ENCODE measurements at regions of chr7 and their contacts with region 1.

Region 1: GRCh38 chr7:150567169-150567568 is at the start of gene GIMAP4:
- DNase-seq: peak; percentile 69
- H3K4me3 ChIP-seq: peak within 1 kb of the TSS; percentile 78 to 80 (median 79)
- H3K27ac ChIP-seq: peak within 1 kb of the TSS; percentile 63
- H3K4me1 ChIP-seq: peaks cover 62% of the 10 kb centered on the region
- H3K27me3 ChIP-seq: no peaks in the 10 kb centered on the region
- CTCF ChIP-seq: no peak
- POLR2A ChIP-seq: peak; percentile 49
- total RNA-seq, gene GIMAP4: 168 and 174 TPM in 2 replicates

Region 2: DNA sequence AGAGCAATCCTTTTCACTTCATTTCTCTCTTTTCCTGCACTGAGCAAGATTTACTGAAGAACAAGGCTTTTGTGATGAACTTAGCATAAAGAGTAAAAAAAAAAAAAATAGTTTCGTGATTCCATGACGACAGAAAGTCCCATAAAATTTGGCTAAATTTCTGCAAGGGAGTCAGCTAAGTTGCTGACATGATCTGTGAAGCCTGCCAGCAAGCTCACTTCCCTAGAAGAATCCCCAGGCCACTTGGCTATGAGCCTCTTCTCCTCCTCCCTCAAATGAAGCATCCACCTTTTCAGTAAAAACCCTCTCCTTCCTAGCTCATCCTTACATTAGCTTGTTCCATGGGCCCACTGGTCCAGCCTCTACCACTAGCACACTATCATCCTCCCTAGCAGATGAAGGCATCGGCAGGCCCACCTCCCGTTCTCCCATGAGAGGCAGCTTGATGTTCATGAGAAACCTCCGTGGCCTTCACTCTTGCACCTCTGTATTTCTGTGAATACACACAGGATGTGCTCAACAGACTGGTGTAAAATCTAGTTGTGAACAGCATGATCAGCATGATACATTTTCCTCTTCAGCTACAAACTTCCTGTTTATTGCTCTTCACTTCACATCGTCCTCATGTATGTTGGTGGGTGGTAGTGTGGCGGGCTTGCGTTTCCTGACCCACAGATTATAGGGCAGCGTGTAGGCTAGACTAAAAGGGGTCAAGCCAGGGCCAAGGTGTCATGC is 85.8 kb before region 1 on chr7:
- CTCF ChIA-PET with region 1: interaction called, 5 read pairs
- POLR2A ChIA-PET with region 1: no interaction called
- dilution Hi-C with region 1: no loop called
- intact Hi-C with region 1: loop called (anchors 1 kb)
- DNase-seq: no peak
- H3K4me3 ChIP-seq: no peak overlapping the region
- H3K27ac ChIP-seq: no peak overlapping the region
- H3K4me1 ChIP-seq: peaks cover 15% of the 10 kb centered on the region
- H3K27me3 ChIP-seq: no peaks in the 10 kb centered on the region
- CTCF ChIP-seq: no peak
- POLR2A ChIP-seq: no peak

Region 3: DNA sequence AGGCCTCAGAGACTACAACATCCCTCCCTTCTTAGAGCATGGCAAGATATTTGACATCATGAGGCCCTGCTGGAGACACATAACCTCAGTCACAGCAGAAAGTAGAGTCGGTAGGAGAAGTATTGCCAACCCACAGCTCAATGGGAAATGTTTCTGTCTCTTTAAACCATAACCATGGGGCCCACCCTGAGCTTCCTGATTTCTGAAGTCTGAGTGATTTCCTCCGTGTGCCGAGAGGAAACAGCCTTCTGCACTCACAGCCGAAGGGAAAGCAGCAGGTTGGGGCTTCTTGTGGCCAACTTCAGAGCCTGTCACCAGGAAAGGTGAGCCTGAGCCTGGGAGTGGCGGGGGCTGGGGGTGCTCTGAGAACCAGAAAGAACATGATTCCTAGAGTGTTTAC is 149.2 kb after region 1 on chr7 and contains the start of gene GIMAP1:
- CTCF ChIA-PET with region 1: no interaction called
- POLR2A ChIA-PET with region 1: no interaction called
- dilution Hi-C with region 1: no loop called
- intact Hi-C with region 1: no loop called
- DNase-seq: peak; percentile 88
- H3K4me3 ChIP-seq: peak within 1 kb of the TSS; percentile 61 to 84 (median 78)
- H3K27ac ChIP-seq: peak within 1 kb of the TSS; percentile 39
- H3K4me1 ChIP-seq: peaks cover 18% of the 10 kb centered on the region
- H3K27me3 ChIP-seq: no peaks in the 10 kb centered on the region
- CTCF ChIP-seq: no peak
- POLR2A ChIP-seq: peak; percentile 97
- total RNA-seq, gene GIMAP1: 11.8 and 11.9 TPM in 2 replicates